B cell (primary cell): ENCODE measurements at regions of chr1 and their contacts with region 1.

Region 1: GRCh38 chr1:42924082-42924850 is 34.4 kb downstream of the SLC2A1 start:
- DNase-seq: peak; percentile 97
- ATAC-seq: peak; percentile 86
- H3K4me3 ChIP-seq: peak overlapping the region; percentile 48 to 83 (median 80)
- H3K4me3 Mint-ChIP-seq: peak overlapping the region; percentile 86
- H3K27ac ChIP-seq: peak overlapping the region; percentile 96 to 98
- H3K27ac Mint-ChIP-seq: peak overlapping the region; percentile 92
- H3K4me1 ChIP-seq: peaks cover 23% of the 10 kb centered on the region in 2 donors
- H3K4me1 Mint-ChIP-seq: peaks cover 43% of the 10 kb centered on the region
- H3K27me3 ChIP-seq: no peaks in the 10 kb centered on the region
- H3K27me3 Mint-ChIP-seq: no peaks in the 10 kb centered on the region
- CTCF ChIP-seq: no peak

Region 2: DNA sequence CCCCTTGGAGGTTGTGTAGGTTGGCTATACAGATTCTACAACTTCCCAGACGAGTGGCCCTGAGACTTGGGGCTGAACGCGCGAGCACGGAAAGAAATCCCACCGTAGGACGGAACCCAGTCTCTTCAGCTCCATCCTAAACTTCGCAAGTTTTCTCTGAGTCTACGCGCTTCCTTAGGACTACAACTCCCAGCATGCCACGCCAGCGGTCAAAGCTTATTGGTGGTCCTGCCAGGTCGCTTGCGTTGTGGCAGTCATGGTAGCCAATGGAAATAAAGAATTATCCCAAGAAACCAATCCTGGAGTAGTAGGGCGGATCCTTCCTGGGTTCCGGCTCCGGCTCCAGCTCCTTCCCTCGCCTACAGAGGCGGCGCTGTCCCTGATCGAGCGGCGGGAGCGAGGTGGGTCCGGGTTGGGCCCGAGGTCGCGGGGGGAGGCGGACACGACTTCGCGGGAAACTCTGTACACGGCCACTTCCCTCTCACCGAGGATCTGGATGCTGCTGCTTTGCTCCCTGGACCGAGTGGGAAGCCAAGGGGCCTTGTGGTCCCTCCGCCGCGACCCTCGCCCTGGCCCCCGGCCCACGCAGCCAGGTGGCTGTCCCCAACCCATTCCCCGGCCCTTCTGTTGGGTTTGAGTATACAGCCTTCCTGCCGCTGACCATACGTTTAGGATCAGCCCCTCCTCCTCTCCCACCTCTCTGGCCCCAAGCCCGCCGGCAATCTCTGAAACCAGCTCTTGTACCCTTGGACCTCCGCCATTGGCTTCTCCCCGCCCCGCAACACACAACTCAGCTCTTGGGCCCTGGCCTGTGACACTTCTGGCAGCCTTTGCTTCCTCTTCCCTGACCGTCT is 77.8 kb before region 1 on chr1 and contains the start of gene ZNF691:
- CTCF ChIA-PET with region 1: interaction called, 3 read pairs
- POLR2A ChIA-PET with region 1: no interaction called
- intact Hi-C with region 1: loop called (anchors 5 kb)
- DNase-seq: peak; percentile 93
- ATAC-seq: peak; percentile 98
- H3K4me3 ChIP-seq: peak within 1 kb of the TSS; percentile 80 to 92 (median 90)
- H3K4me3 Mint-ChIP-seq: peak within 1 kb of the TSS; percentile 95
- H3K27ac ChIP-seq: peak within 1 kb of the TSS; percentile 41 to 76
- H3K27ac Mint-ChIP-seq: peak within 1 kb of the TSS; percentile 91
- H3K4me1 ChIP-seq: peaks cover 17 to 24% of the 10 kb centered on the region in 2 donors
- H3K4me1 Mint-ChIP-seq: peaks cover 46% of the 10 kb centered on the region
- H3K27me3 ChIP-seq: no peaks in the 10 kb centered on the region
- H3K27me3 Mint-ChIP-seq: no peaks in the 10 kb centered on the region
- CTCF ChIP-seq: peak; percentile 16
- total RNA-seq, gene ZNF691: 17.1 and 18.4 TPM in 2 replicates

Region 3: GRCh38 chr1:42941640-42942330 is 17.5 kb after region 1 on chr1:
- CTCF ChIA-PET with region 1: interaction called, 6 read pairs
- POLR2A ChIA-PET with region 1: interaction called, 209 read pairs
- intact Hi-C with region 1: loop called (anchors 2 kb)
- DNase-seq: peak; percentile 13
- ATAC-seq: no peak
- H3K4me3 ChIP-seq: no peak overlapping the region
- H3K4me3 Mint-ChIP-seq: no peak overlapping the region
- H3K27ac ChIP-seq: peak overlapping the region; percentile 66 to 76
- H3K27ac Mint-ChIP-seq: peak overlapping the region; percentile 92
- H3K4me1 ChIP-seq: peaks cover 98 to 100% of the 10 kb centered on the region in 2 donors
- H3K4me1 Mint-ChIP-seq: peaks cover 96% of the 10 kb centered on the region
- H3K27me3 ChIP-seq: no peaks in the 10 kb centered on the region
- H3K27me3 Mint-ChIP-seq: no peaks in the 10 kb centered on the region
- CTCF ChIP-seq: no peak

Region 4: GRCh38 chr1:42958488-42959319 is 34.4 kb after region 1 on chr1 and contains the start of gene SLC2A1:
- CTCF ChIA-PET with region 1: interaction called, 82 read pairs
- POLR2A ChIA-PET with region 1: interaction called, 209 read pairs
- intact Hi-C with region 1: loop called (anchors 1 kb)
- DNase-seq: peak; percentile 97
- ATAC-seq: peak; percentile 89
- H3K4me3 ChIP-seq: peak within 1 kb of the TSS; percentile 76 to 93 (median 87)
- H3K4me3 Mint-ChIP-seq: peak within 1 kb of the TSS; percentile 97
- H3K27ac ChIP-seq: peak within 1 kb of the TSS; percentile 59 to 86
- H3K27ac Mint-ChIP-seq: peak within 1 kb of the TSS; percentile 99
- H3K4me1 ChIP-seq: peaks cover 64 to 85% of the 10 kb centered on the region in 2 donors
- H3K4me1 Mint-ChIP-seq: peaks cover 73% of the 10 kb centered on the region
- H3K27me3 ChIP-seq: no peaks in the 10 kb centered on the region
- H3K27me3 Mint-ChIP-seq: no peaks in the 10 kb centered on the region
- CTCF ChIP-seq: no peak
- total RNA-seq, gene SLC2A1: 240 and 241 TPM in 2 replicates

Region 5: GRCh38 chr1:42993631-42994121 is 69.4 kb after region 1 on chr1:
- CTCF ChIA-PET with region 1: interaction called, 7 read pairs
- POLR2A ChIA-PET with region 1: no interaction called
- intact Hi-C with region 1: loop called (anchors 1 kb)
- DNase-seq: peak; percentile 70
- ATAC-seq: peak; percentile 88
- H3K4me3 ChIP-seq: peak overlapping the region in 1 of 5 experiments; percentile 5
- H3K4me3 Mint-ChIP-seq: peak overlapping the region; percentile 14
- H3K27ac ChIP-seq: peak overlapping the region in 1 of 2 donors; percentile 84
- H3K27ac Mint-ChIP-seq: peak overlapping the region; percentile 43
- H3K4me1 ChIP-seq: peaks cover 12% of the 10 kb centered on the region in 2 donors
- H3K4me1 Mint-ChIP-seq: peaks cover 19% of the 10 kb centered on the region
- H3K27me3 ChIP-seq: no peaks in the 10 kb centered on the region
- H3K27me3 Mint-ChIP-seq: no peaks in the 10 kb centered on the region
- CTCF ChIP-seq: no peak

Region 6: GRCh38 chr1:43414634-43415223 is 490.5 kb after region 1 on chr1:
- CTCF ChIA-PET with region 1: interaction called, 10 read pairs
- POLR2A ChIA-PET with region 1: no interaction called
- intact Hi-C with region 1: no loop called
- DNase-seq: peak; percentile 79
- ATAC-seq: peak; percentile 96
- H3K4me3 ChIP-seq: no peak overlapping the region
- H3K4me3 Mint-ChIP-seq: no peak overlapping the region
- H3K27ac ChIP-seq: no peak overlapping the region
- H3K27ac Mint-ChIP-seq: peak overlapping the region; percentile 34
- H3K4me1 ChIP-seq: no peaks in the 10 kb centered on the region
- H3K4me1 Mint-ChIP-seq: peaks cover 3% of the 10 kb centered on the region
- H3K27me3 ChIP-seq: no peaks in the 10 kb centered on the region
- H3K27me3 Mint-ChIP-seq: no peaks in the 10 kb centered on the region
- CTCF ChIP-seq: peak; percentile 79